Activated CD4-positive, alpha-beta memory T cell treated with anti-CD3 and anti-CD28 coated beads for 36 hours (primary cell): ENCODE measurements at regions of chr4 and their contacts with region 1.

Region 1: DNA sequence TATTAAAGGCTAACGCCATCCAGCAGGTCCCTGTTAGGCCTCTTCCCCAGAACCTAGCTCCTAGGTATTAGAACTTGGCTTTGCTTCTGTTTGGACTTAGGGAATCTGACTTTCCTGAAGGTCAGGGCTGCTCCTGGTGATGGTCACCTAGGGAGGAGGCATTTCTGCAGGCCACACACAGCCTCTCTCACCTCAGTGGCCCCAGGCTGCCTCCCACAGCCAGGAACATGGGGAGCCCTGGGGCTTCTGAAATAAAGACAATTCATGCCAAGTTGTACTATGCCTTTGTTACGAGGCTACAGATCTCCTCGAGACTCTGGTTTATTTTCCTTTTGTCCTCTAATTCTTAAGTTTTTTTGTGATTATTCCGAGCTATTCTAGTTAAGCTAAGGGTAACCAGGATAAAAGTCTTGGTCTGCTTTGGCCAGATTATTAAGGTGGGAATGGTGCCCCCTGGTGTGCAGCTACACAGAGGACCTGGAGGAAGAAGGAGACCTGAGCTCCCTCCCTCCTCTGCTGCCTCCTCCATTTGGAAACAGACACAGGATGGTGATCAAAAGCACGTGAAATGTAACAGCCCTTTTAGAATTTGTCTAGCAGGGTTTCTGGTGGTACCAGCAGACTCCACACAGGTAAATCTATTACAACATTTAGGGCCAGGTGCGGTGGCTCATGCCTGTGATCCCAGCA is 131.0 kb downstream of the DCLK2 start:
- DNase-seq: peak; percentile 49
- H3K4me3 Mint-ChIP-seq: no peak overlapping the region
- H3K27ac Mint-ChIP-seq: no peak overlapping the region
- H3K4me1 Mint-ChIP-seq: no peaks in the 10 kb centered on the region
- H3K27me3 Mint-ChIP-seq: peaks cover 1% of the 10 kb centered on the region

Region 2: DNA sequence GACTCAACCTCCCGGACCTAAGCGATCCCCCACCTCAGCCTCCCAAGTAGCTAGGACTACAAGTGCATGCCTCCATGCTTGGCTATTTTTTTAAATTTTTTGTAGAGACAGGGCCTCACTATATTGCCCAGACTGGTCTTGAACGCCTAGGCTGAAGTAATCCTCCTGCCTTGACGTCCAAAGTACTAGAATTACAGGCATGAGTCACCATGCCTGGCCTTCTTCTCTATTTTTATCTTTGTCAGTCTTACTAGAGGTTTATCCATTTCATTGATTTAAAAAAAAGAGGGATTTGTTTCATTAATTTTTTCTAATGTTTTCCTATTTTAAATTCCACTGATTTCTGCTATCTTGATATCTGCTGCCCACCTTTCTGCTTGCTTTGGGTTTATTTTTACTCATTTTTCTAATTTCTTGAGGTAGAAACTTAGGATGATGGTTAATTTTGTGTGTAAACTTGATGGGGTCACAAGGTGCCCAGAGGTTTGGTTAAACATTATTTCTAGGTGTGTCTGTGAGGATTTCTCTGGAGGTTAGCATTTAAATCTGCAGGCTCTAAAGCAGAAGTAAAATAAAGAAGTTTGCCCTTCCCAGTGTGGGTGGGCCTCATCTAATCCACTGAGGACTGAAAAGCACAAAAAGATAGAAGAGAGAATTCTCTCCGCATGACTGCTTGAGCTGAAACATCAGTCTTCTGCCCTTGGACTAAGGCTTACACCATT is 247.2 kb before region 1 on chr4:
- CTCF ChIA-PET with region 1: no interaction called
- POLR2A ChIA-PET with region 1: no interaction called
- intact Hi-C with region 1: no loop called
- DNase-seq: no peak
- H3K4me3 Mint-ChIP-seq: no peak overlapping the region
- H3K27ac Mint-ChIP-seq: no peak overlapping the region
- H3K4me1 Mint-ChIP-seq: no peaks in the 10 kb centered on the region
- H3K27me3 Mint-ChIP-seq: peaks cover 5% of the 10 kb centered on the region

Region 3: DNA sequence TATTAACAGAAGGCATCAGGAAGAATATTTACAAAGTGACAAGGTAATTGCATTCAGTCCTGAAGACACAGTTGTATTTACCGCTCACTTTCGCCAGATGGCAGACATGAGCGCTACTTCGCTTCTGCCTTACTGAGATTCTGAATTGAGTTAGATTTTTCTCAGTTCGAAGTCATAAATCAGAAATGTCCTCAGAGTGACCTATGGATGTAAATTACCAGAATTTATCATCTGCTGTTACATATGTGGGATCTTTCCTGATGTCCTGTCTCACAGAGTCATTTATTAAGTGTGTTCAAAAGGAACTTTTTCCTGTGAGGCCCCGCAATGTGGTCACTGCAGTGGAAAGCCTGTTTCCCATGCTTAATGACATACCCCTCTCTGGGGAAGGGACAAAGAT is 228.3 kb before region 1 on chr4:
- CTCF ChIA-PET with region 1: interaction called, 4 read pairs
- POLR2A ChIA-PET with region 1: no interaction called
- intact Hi-C with region 1: loop called (anchors 10 kb)
- DNase-seq: peak; percentile 66
- H3K4me3 Mint-ChIP-seq: no peak overlapping the region
- H3K27ac Mint-ChIP-seq: no peak overlapping the region
- H3K4me1 Mint-ChIP-seq: peaks cover 10% of the 10 kb centered on the region
- H3K27me3 Mint-ChIP-seq: no peaks in the 10 kb centered on the region

Region 4: GRCh38 chr4:150010525-150011126 is 198.7 kb before region 1 on chr4:
- CTCF ChIA-PET with region 1: interaction called, 10 read pairs
- POLR2A ChIA-PET with region 1: no interaction called
- intact Hi-C with region 1: loop called (anchors 2 kb)
- DNase-seq: no peak
- H3K4me3 Mint-ChIP-seq: no peak overlapping the region
- H3K27ac Mint-ChIP-seq: no peak overlapping the region
- H3K4me1 Mint-ChIP-seq: no peaks in the 10 kb centered on the region
- H3K27me3 Mint-ChIP-seq: peaks cover 12% of the 10 kb centered on the region